ENCODE measurements at regions of chr17 and their contacts with region 1.

Region 1: GRCh38 chr17:47941236-47941994 is at the start of gene PNPO:
- DNase-seq: peak; percentile 98
- H3K4me3 Mint-ChIP-seq: peak within 1 kb of the TSS; percentile 92
- H3K27ac Mint-ChIP-seq: peak within 1 kb of the TSS; percentile 89
- H3K4me1 Mint-ChIP-seq: peaks cover 53% of the 10 kb centered on the region
- H3K27me3 Mint-ChIP-seq: no peaks in the 10 kb centered on the region

Region 2: DNA sequence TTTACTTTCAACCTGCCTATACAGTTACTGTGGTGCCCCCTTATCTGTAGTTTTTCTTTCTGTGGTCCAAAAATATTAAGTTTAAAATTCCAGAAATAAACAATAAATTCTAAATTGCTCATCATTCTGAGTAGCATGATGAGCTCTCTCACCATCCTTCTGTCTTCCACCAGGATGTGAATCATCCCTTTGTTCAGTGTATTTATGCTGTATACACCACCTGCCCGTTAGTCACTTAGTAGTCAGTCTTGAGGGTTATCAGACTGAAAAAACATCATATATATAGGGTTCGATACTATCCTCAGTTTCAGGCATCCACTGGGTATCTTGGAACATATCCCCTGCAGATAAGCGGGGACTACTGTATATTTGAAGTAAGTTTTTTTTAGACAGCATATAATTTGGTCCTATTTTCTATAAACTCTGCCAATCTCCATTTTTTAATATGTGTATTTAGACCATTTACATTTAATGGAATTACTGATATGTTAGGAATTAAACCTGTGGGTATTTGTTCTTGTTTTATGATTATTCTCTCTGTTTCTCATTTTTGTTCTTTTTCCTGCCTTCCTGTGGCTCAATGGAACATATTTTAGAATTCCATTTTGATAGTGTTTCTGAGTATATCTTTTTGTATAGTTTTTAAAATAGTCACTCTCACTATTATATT is 177.4 kb before region 1 on chr17:
- CTCF ChIA-PET with region 1: no interaction called
- DNase-seq: no peak
- H3K4me3 Mint-ChIP-seq: no peak overlapping the region
- H3K27ac Mint-ChIP-seq: no peak overlapping the region
- H3K4me1 Mint-ChIP-seq: peaks cover 3% of the 10 kb centered on the region
- H3K27me3 Mint-ChIP-seq: peaks cover 44% of the 10 kb centered on the region

Region 3: GRCh38 chr17:47864770-47865216 is 76.6 kb before region 1 on chr17:
- CTCF ChIA-PET with region 1: no interaction called
- DNase-seq: peak; percentile 46
- H3K4me3 Mint-ChIP-seq: no peak overlapping the region
- H3K27ac Mint-ChIP-seq: peak overlapping the region; percentile 72
- H3K4me1 Mint-ChIP-seq: peaks cover 32% of the 10 kb centered on the region
- H3K27me3 Mint-ChIP-seq: peaks cover 63% of the 10 kb centered on the region

Region 4: GRCh38 chr17:47895856-47896671 is 45.4 kb before region 1 on chr17 and contains the start of gene SP2:
- CTCF ChIA-PET with region 1: interaction called, 17 read pairs
- DNase-seq: peak; percentile 100
- H3K4me3 Mint-ChIP-seq: peak within 1 kb of the TSS; percentile 92
- H3K27ac Mint-ChIP-seq: peak within 1 kb of the TSS; percentile 98
- H3K4me1 Mint-ChIP-seq: peaks cover 49% of the 10 kb centered on the region
- H3K27me3 Mint-ChIP-seq: no peaks in the 10 kb centered on the region

Region 5: DNA sequence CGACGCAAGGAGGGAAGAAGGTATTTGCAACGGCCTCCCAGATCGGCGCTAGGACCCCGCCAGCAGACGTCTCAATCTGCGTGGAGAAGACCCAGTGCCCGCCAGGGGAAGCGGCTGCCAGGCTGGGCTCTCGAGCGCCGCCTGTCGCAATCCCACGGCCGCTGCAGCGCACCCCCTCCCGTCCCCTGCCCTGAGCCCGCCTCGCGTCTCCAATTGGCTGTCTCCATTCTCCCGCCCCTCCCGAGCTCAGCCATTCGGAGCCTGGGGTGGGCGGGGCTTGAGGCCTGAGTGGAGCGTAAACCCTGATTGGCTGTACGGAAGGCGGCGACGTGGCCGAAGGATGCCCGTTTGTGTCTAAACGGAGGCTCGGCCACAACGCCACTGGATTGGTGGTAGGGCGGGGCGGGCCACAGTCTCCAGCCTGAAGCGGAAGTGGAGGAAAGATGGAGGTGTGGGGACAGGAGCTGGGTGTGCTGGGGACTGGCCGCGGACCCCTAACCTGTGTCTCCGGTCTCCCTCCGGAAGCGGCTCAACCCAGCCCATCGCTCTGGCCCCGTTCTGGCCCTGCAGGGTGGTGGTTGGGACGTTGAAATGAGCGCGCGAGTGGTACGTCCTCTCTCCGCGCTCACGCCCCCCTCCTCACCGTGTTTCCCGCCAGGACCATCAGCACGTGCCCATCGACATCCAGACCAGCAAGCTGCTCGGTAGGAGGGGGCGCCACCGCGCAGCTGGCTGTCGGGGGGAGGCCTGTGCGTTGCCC is 29.5 kb after region 1 on chr17 and contains the start of gene CDK5RAP3:
- CTCF ChIA-PET with region 1: interaction called, 151 read pairs
- DNase-seq: peak; percentile 100
- H3K4me3 Mint-ChIP-seq: peak within 1 kb of the TSS; percentile 98
- H3K27ac Mint-ChIP-seq: peak within 1 kb of the TSS; percentile 94
- H3K4me1 Mint-ChIP-seq: peaks cover 30% of the 10 kb centered on the region
- H3K27me3 Mint-ChIP-seq: peaks cover 15% of the 10 kb centered on the region